HEK293 (cell line): ENCODE measurements at regions of chr1 and their contacts with region 1.

Region 1: GRCh38 chr1:91011726-91012125 is 10.1 kb downstream of the ZNF644 start:
- H3K4me3 ChIP-seq: no peak overlapping the region
- H3K27ac ChIP-seq: no peak overlapping the region
- H3K4me1 ChIP-seq: 0 out of 2 replicates have a peak, but pooled peaks cover 2% of the 10 kb centered on the region
- CTCF ChIP-seq: no peak

Region 2: DNA sequence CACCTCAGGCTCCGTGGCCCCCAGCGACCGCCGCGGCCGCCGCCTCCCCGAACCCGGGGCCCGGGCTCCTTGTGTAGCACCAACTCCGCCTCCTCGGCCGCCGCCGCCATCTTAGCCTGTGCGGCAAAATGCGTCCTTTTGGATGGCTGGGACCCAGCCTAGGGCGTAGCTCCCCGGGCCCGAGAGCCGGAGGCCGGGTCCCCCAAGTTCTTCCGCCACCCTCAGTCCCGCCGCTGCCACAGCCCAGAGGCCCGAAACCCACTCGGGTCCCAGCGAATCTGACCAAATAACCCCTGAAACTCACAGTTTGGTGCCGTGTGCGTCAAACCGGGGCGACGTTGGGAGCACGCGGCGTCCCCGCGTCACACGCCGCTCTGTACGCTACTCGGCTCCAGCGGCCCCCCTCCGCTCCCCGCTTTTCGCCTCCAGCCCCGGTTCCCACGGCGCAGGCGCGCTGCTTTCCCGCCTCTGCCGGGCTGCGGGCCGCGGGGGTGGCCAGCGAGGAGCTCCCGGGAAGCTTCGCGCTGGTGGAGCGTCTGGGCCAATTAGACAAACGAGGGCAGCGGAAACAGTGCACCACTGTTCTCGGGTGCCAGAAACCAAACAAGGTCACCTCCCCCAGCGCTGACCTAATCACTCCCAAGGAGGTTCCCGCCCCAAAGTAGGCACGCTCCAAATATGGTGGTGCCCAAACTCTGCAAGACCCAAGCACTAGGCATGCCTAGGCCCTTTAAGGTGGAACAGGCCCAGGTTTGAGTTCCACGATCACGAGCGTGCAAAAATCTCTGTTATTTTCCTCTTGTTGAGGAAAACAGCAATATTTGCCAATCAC is 10.2 kb after region 1 on chr1 and contains the start of gene ZNF644:
- CTCF ChIA-PET with region 1: interaction called, 4 read pairs
- POLR2A ChIA-PET with region 1: interaction called, 12 read pairs
- H3K4me3 ChIP-seq: peak within 1 kb of the TSS; percentile 97
- H3K27ac ChIP-seq: peak within 1 kb of the TSS; percentile 100
- H3K4me1 ChIP-seq: no peaks in the 10 kb centered on the region
- CTCF ChIP-seq: no peak